GM10248 (cell line): ENCODE measurements at regions of chr17 and their contacts with region 1.

Region 1: GRCh38 chr17:35808962-35809854 is at the start of gene TAF15:
- DNase-seq: peak; percentile 96
- CTCF ChIP-seq: peak; percentile 69

Region 2: GRCh38 chr17:35740997-35741931 is 67.9 kb before region 1 on chr17:
- CTCF ChIA-PET with region 1: no interaction called
- POLR2A ChIA-PET with region 1: no interaction called
- DNase-seq: no peak
- CTCF ChIP-seq: no peak

Region 3: GRCh38 chr17:35788504-35789368 is 20.5 kb before region 1 on chr17:
- CTCF ChIA-PET with region 1: interaction called, 17 read pairs
- POLR2A ChIA-PET with region 1: interaction called, 3 read pairs
- DNase-seq: no peak
- CTCF ChIP-seq: no peak

Region 4: DNA sequence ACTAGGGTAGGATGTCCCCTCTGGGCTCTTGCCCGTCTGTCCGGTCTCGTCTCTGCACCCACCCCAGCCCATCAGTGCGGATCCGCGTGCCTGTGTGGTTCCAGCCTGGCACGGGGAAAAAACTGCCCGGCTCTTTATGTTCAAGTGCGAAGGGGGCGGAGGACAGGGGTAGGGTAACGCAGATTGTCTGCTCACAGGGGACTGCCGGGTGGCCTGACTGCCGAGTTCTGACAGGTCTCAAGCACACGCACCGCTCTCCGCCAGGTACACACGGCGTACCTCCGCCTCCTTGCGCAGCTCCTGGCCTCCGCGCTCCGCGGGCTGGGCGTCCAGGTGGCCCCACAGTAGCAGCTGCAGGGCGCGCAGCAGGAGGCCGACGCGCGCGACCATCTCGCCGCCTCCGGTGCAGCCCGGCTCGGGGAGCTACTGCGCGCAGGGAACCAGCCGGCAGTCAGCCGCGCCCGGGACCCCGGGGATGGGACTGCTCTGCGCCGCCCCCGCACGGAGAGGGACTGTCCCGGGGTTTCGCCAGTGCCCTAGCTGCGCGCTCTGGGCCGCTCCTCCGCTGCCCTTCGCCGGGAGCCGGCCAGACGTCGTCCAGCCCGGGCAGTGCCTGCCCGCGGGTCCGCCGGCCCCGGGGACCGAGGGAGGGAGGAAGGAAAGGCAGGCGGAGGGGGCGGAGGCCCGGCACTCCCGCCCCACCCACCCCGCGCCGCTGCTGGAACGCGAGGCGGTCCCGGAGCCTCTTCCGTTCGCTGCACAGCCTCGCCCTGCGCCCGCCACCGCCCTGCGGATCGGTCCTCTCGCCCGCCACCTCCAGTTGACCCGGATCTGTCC is 14.0 kb before region 1 on chr17 and contains the start of gene MMP28:
- CTCF ChIA-PET with region 1: interaction called, 17 read pairs
- POLR2A ChIA-PET with region 1: no interaction called
- DNase-seq: peak; percentile 46
- CTCF ChIP-seq: no peak

Region 5: GRCh38 chr17:35819456-35819855 is 10.2 kb after region 1 on chr17:
- CTCF ChIA-PET with region 1: interaction called, 24 read pairs
- POLR2A ChIA-PET with region 1: no interaction called
- DNase-seq: no peak
- CTCF ChIP-seq: no peak

Region 6: GRCh38 chr17:35981908-35982330 is 172.7 kb after region 1 on chr17:
- CTCF ChIA-PET with region 1: no interaction called
- POLR2A ChIA-PET with region 1: no interaction called
- DNase-seq: no peak
- CTCF ChIP-seq: peak; percentile 35